CD4-positive, alpha-beta memory T cell (primary cell): ENCODE measurements at regions of chr10 and their contacts with region 1.

Region 1: DNA sequence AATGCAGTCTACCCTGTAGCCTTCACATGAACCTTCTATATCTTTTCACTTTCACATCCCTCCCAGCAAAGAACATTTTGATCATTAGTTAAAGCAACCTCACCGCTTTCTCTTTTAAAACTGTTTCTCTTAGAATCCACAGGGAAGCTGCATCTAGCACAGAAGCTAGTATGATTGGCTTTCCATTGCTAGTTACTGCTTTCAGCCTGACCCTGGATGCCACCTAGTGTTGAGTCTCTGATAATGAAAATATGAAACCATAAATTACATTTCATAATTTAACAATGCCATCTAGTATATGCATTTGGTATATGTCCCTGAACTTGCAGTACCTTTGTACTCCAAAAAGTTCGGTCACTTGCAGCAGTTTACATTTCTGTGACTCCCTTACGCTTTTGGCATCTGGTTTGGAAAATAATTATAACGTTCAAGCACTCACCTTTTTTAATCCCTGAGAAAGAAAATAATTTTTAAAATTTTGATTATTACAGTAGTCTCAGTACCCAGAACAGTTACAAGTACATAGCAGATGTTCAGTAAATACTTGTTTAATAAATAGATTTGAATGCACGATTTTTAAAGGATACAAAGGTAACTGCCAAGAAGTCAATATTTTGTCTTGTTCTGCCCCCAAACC is 22.7 kb downstream of the CISD1 start:
- DNase-seq: peak; percentile 40 to 51 (median 47)
- H3K4me3 ChIP-seq: no peak overlapping the region
- H3K4me3 Mint-ChIP-seq: peak overlapping the region in 1 of 8 donors; percentile 23
- H3K27ac ChIP-seq: no peak overlapping the region
- H3K27ac Mint-ChIP-seq: peak overlapping the region in 1 of 7 donors; percentile 0
- H3K4me1 ChIP-seq: no peaks in the 10 kb centered on the region
- H3K4me1 Mint-ChIP-seq: peaks cover 0 to 5% (median 2%) of the 10 kb centered on the region in 4 donors
- H3K27me3 ChIP-seq: no peaks in the 10 kb centered on the region
- H3K27me3 Mint-ChIP-seq: no peaks in the 10 kb centered on the region

Region 2: DNA sequence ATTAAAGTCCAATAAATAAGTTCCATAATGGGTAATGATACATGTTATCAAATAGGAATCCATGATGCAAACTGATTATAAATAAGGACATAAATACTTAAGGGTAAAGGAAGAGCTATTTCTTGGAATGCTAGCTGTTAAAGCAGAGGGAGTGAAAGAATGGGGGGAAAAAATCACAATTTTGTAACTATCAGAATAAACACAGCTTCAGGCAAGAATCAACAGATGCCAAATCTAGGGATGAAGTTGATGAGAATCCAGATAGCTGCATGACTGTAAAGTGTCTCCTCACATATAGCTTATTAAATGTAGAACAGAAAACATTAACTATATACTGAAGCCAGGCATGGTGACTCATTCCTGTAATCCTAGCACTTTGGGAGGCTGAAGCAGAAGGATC is 28.9 kb before region 1 on chr10:
- CTCF ChIA-PET with region 1: no interaction called
- POLR2A ChIA-PET with region 1: no interaction called
- intact Hi-C with region 1: no loop called
- DNase-seq: no peak
- H3K4me3 ChIP-seq: no peak overlapping the region
- H3K4me3 Mint-ChIP-seq: no peak overlapping the region
- H3K27ac ChIP-seq: no peak overlapping the region
- H3K27ac Mint-ChIP-seq: peak overlapping the region in 1 of 7 donors; percentile 1
- H3K4me1 ChIP-seq: peaks cover 26% of the 10 kb centered on the region
- H3K4me1 Mint-ChIP-seq: peaks cover 17 to 46% (median 29%) of the 10 kb centered on the region in 4 donors
- H3K27me3 ChIP-seq: no peaks in the 10 kb centered on the region
- H3K27me3 Mint-ChIP-seq: no peaks in the 10 kb centered on the region

Region 3: GRCh38 chr10:58275908-58276307 is 15.7 kb before region 1 on chr10:
- CTCF ChIA-PET with region 1: interaction called, 13 read pairs
- POLR2A ChIA-PET with region 1: no interaction called
- intact Hi-C with region 1: no loop called
- DNase-seq: peak in 1 of 5 donors; percentile 14
- H3K4me3 ChIP-seq: no peak overlapping the region
- H3K4me3 Mint-ChIP-seq: no peak overlapping the region
- H3K27ac ChIP-seq: no peak overlapping the region
- H3K27ac Mint-ChIP-seq: no peak overlapping the region
- H3K4me1 ChIP-seq: no peaks in the 10 kb centered on the region
- H3K4me1 Mint-ChIP-seq: peaks cover 0 to 12% (median 6%) of the 10 kb centered on the region in 4 donors
- H3K27me3 ChIP-seq: no peaks in the 10 kb centered on the region
- H3K27me3 Mint-ChIP-seq: no peaks in the 10 kb centered on the region